ENCODE measurements at regions of chr15 and their contacts with region 1.

Region 1: DNA sequence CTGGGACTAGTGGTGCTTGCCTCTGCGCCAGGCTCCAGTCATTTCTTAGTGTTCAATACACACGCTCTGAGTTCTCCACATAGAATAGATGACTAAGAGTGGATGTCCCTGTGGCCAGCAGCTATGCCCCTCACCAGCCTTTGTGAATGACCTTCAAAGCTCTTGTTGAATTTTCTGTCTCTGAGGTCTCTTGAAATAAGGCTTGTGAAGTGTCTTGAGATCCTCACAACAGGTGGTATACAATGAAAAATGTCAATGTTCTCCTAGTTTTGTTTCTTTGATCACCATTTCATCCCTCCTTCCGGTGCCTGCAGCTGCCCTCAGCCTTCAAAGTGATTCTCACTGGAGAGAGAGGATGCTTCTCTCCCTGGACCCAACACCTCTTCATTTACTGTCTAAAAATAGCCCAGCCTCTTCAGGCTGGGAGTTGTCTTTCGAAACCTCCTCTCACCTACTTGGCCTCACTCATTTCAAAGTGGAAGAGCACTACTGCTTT is 5.4 kb downstream of the MAPKBP1 start:
- DNase-seq: no peak
- ATAC-seq: no peak
- H3K4me3 Mint-ChIP-seq: no peak overlapping the region
- H3K27ac Mint-ChIP-seq: peak overlapping the region; percentile 71
- H3K4me1 Mint-ChIP-seq: peaks cover 51% of the 10 kb centered on the region
- H3K27me3 Mint-ChIP-seq: no peaks in the 10 kb centered on the region
- CTCF ChIP-seq: no peak

Region 2: GRCh38 chr15:41827880-41828806 is 48.4 kb after region 1 on chr15 and contains the start of gene JMJD7:
- CTCF ChIA-PET with region 1: interaction called, 56 read pairs
- POLR2A ChIA-PET with region 1: interaction called, 15 read pairs
- DNase-seq: peak; percentile 93
- ATAC-seq: peak; percentile 93
- H3K4me3 Mint-ChIP-seq: peak within 1 kb of the TSS; percentile 92
- H3K27ac Mint-ChIP-seq: peak within 1 kb of the TSS; percentile 39; the same call in 1 of the 2 replicates
- H3K4me1 Mint-ChIP-seq: peaks cover 7% of the 10 kb centered on the region
- H3K27me3 Mint-ChIP-seq: no peaks in the 10 kb centered on the region
- CTCF ChIP-seq: no peak
- total RNA-seq, gene JMJD7: 14.8 to 19.9 TPM (median 18.2 TPM) in 3 replicates